ENCODE measurements at regions of chr17 and their contacts with region 1.

Region 1: DNA sequence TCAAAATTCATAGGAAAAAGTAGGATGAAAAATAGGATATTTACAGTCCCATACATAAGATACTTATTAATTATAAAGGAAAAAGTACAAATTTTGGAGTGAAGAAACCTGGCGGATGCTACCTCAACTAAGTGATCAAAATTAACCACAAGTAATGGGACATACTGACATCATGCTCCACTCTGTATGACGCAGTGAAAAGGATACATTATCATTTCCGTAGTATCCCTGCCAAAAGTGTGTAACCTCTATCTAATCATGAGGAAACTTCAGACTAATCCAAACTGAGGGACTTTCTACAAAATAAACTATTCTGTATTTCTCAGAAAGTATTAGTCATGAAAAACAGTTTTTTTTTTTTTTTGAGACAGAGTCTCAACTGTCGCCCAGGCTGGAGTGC is 60.5 kb downstream of the TRIM37 start:
- DNase-seq: no peak
- H3K4me3 ChIP-seq: no peak overlapping the region
- H3K27ac ChIP-seq: no peak overlapping the region
- H3K4me1 ChIP-seq: no peaks in the 10 kb centered on the region
- H3K27me3 ChIP-seq: no peaks in the 10 kb centered on the region
- CTCF ChIP-seq: no peak
- EP300 ChIP-seq: no peak
- POLR2A ChIP-seq: no peak

Region 2: GRCh38 chr17:58136669-58137283 is 909.4 kb before region 1 on chr17:
- intact Hi-C with region 1: loop called in 1 of 4 experiments (anchors 10 kb)
- DNase-seq: no peak
- H3K4me3 ChIP-seq: no peak overlapping the region
- H3K27ac ChIP-seq: no peak overlapping the region
- H3K4me1 ChIP-seq: no peaks in the 10 kb centered on the region
- H3K27me3 ChIP-seq: no peaks in the 10 kb centered on the region
- CTCF ChIP-seq: no peak
- EP300 ChIP-seq: no peak
- POLR2A ChIP-seq: no peak

Region 3: GRCh38 chr17:59155439-59156182 is 109.4 kb after region 1 on chr17 and contains the start of gene PRR11:
- intact Hi-C with region 1: no loop called
- DNase-seq: peak; percentile 89 to 94 (median 91)
- H3K4me3 ChIP-seq: peak within 1 kb of the TSS; percentile 53
- H3K27ac ChIP-seq: peak within 1 kb of the TSS; percentile 26 to 77
- H3K4me1 ChIP-seq: no peaks in the 10 kb centered on the region
- H3K27me3 ChIP-seq: no peaks in the 10 kb centered on the region
- CTCF ChIP-seq: no peak
- EP300 ChIP-seq: no peak
- POLR2A ChIP-seq: no peak
- total RNA-seq, gene PRR11: 0.96 to 2.5 (median 1.4) TPM

Measured in ovary (tissue), 10 donors.